ENCODE measurements at regions of chr21 and their contacts with region 1.

Region 1: GRCh38 chr21:41361786-41362604 is at the start of gene MX2:
- DNase-seq: peak; percentile 82
- ATAC-seq: peak; percentile 79
- H3K4me3 Mint-ChIP-seq: peak within 1 kb of the TSS; percentile 91
- H3K27ac Mint-ChIP-seq: peak within 1 kb of the TSS; percentile 99
- H3K4me1 Mint-ChIP-seq: peaks cover 47% of the 10 kb centered on the region
- H3K27me3 Mint-ChIP-seq: no peaks in the 10 kb centered on the region
- total RNA-seq, gene MX2: 103 to 106 TPM

Region 2: DNA sequence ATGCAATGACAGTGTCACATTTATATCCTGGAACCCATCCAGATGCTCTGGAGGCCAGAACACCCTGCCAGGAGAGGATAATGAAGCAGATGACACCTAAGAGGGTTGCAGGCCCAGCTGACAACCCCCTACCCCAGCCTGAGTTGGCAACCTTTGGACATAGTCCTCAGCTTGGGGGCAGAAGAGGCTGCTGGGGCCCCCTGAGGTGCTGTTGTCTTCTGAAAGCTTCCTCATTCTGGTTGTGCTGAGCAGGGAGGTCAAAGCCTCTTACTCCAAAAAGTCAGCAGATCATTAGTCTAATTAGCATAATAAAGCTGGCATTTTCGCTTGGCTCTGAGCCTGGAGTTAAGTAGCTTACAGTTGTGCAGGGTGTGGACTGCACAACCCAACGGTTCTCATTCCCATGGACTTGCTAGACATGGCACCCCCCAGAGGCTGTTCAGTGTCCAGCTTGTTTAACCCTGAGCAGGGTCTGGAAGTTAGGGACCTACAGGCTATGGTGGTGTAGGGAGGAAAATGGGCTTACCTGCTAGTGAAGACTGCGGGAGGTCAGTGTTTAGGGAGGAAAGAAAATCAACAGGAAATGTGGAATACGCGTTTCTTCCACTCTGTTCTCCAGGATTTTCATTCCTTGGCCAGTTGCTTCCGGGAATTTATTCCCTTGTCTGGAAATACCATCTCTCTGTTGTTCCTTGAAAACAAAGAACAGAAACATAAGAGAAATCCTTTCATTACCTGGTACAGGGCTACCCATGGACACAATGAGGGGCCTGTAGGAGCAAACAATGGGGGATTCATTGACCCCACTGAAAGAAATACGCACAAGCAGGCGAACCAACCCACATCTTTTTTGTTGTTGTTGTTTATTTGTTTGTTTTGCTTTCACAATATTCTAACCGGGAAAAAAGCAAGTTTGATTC is 214.3 kb before region 1 on chr21:
- POLR2A ChIA-PET with region 1: no interaction called
- DNase-seq: no peak
- ATAC-seq: no peak
- H3K4me3 Mint-ChIP-seq: no peak overlapping the region
- H3K27ac Mint-ChIP-seq: no peak overlapping the region
- H3K4me1 Mint-ChIP-seq: no peaks in the 10 kb centered on the region
- H3K27me3 Mint-ChIP-seq: peaks cover 2% of the 10 kb centered on the region

Region 3: GRCh38 chr21:41283211-41283818 is 78.7 kb before region 1 on chr21:
- POLR2A ChIA-PET with region 1: interaction called, 11 read pairs
- DNase-seq: no peak
- ATAC-seq: peak; percentile 93
- H3K4me3 Mint-ChIP-seq: no peak overlapping the region
- H3K27ac Mint-ChIP-seq: no peak overlapping the region
- H3K4me1 Mint-ChIP-seq: peaks cover 3% of the 10 kb centered on the region
- H3K27me3 Mint-ChIP-seq: peaks cover 36% of the 10 kb centered on the region

Region 4: GRCh38 chr21:41374867-41375533 is 13.0 kb after region 1 on chr21:
- POLR2A ChIA-PET with region 1: interaction called, 50 read pairs
- DNase-seq: no peak
- ATAC-seq: no peak
- H3K4me3 Mint-ChIP-seq: no peak overlapping the region
- H3K27ac Mint-ChIP-seq: peak overlapping the region; percentile 79
- H3K4me1 Mint-ChIP-seq: peaks cover 31% of the 10 kb centered on the region
- H3K27me3 Mint-ChIP-seq: no peaks in the 10 kb centered on the region

Region 5: GRCh38 chr21:41419911-41420862 is 58.2 kb after region 1 on chr21:
- POLR2A ChIA-PET with region 1: interaction called, 233 read pairs
- DNase-seq: peak; percentile 77
- ATAC-seq: peak; percentile 84
- H3K4me3 Mint-ChIP-seq: peak overlapping the region; percentile 93
- H3K27ac Mint-ChIP-seq: peak overlapping the region; percentile 98
- H3K4me1 Mint-ChIP-seq: peaks cover 52% of the 10 kb centered on the region
- H3K27me3 Mint-ChIP-seq: no peaks in the 10 kb centered on the region

Measured in activated naive CD8-positive, alpha-beta T cell treated with anti-CD3 and anti-CD28 coated beads, Interleukin-2, amount 10 ng/mL, durations not matched to agents 7 days and 5 days (primary cell).